Psoas muscle (tissue), 8 donors: ENCODE measurements at regions of chr6 and their contacts with region 1.

Region 1: GRCh38 chr6:3251462-3252314 is 7.1 kb upstream of the PSMG4 start:
- DNase-seq: peak; percentile 82 to 90
- ATAC-seq: peak; percentile 73 to 91 (median 86)
- H3K4me3 ChIP-seq: peak overlapping the region; percentile 39
- H3K27ac ChIP-seq: no peak overlapping the region
- H3K4me1 ChIP-seq: peaks cover 4% of the 10 kb centered on the region
- H3K27me3 ChIP-seq: peaks cover 0 to 30% (median 7%) of the 10 kb centered on the region in 3 donors
- CTCF ChIP-seq: peak; percentile 99

Region 2: DNA sequence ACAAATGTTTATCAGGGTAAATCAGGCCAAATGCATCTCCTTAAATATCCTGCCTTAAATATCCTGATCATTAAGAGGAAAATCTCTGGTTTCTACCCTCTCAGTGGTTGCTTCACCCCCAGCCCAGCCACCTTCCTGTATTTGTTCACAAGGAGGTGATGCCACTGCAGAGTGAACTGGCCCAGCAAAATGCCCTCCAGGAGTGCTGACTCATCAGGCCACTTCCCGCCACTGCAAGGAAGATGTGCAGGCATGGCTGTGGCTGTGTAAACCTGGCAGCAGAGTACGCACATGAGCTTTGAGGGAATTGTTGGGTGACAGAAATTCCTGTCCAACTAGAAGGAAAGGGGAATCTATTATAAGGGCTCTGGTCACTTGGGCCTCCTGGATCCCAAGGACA is 238.2 kb before region 1 on chr6:
- intact Hi-C with region 1: loop called in 1 of 2 experiments (anchors 5 kb)
- DNase-seq: peak in 1 of 2 donors; percentile 40
- ATAC-seq: peak; percentile 52 to 74 (median 66)
- H3K4me3 ChIP-seq: no peak overlapping the region
- H3K27ac ChIP-seq: no peak overlapping the region
- H3K4me1 ChIP-seq: no peaks in the 10 kb centered on the region
- H3K27me3 ChIP-seq: no peaks in the 10 kb centered on the region
- CTCF ChIP-seq: no peak

Region 3: GRCh38 chr6:3125815-3126214 is 125.9 kb before region 1 on chr6:
- intact Hi-C with region 1: loop called (anchors 1 to 5 kb)
- DNase-seq: no peak
- ATAC-seq: no peak
- H3K4me3 ChIP-seq: no peak overlapping the region
- H3K27ac ChIP-seq: no peak overlapping the region
- H3K4me1 ChIP-seq: no peaks in the 10 kb centered on the region
- H3K27me3 ChIP-seq: no peaks in the 10 kb centered on the region
- CTCF ChIP-seq: no peak

Region 4: GRCh38 chr6:3162565-3163247 is 89.0 kb before region 1 on chr6:
- intact Hi-C with region 1: loop called in 1 of 2 experiments (anchors 5 kb)
- DNase-seq: peak; percentile 70 to 83
- ATAC-seq: peak; percentile 79 to 88 (median 82)
- H3K4me3 ChIP-seq: peak overlapping the region; percentile 87
- H3K27ac ChIP-seq: peak overlapping the region; percentile 90
- H3K4me1 ChIP-seq: peaks cover 4% of the 10 kb centered on the region
- H3K27me3 ChIP-seq: no peaks in the 10 kb centered on the region
- CTCF ChIP-seq: no peak

Region 5: GRCh38 chr6:3231247-3232016 is 20.3 kb before region 1 on chr6:
- intact Hi-C with region 1: no loop called
- DNase-seq: peak; percentile 70 to 73
- ATAC-seq: peak; percentile 24 to 67 (median 62)
- H3K4me3 ChIP-seq: peak overlapping the region; percentile 63
- H3K27ac ChIP-seq: peak overlapping the region; percentile 5
- H3K4me1 ChIP-seq: peaks cover 36% of the 10 kb centered on the region
- H3K27me3 ChIP-seq: peaks cover 0 to 97% (median 25%) of the 10 kb centered on the region in 3 donors
- CTCF ChIP-seq: no peak